Activated T-helper 2 cell treated with anti-CD3 and anti-CD28 coated beads, Interferon-gamma antibody, Interleukin-2, Interleukin-4, amounts not matched to agents 10 μg/mL and 5 μg/mL and 100 μg/mL, durations not matched to agents 14 hours and 24 hours and 36 hours (primary cell): ENCODE measurements at regions of chr7 and their contacts with region 1.

Region 1: GRCh38 chr7:150514748-150515222 is at the start of gene GIMAP7:
- DNase-seq: peak; percentile 63
- H3K4me3 Mint-ChIP-seq: peak within 1 kb of the TSS; percentile 89
- H3K27ac Mint-ChIP-seq: peak within 1 kb of the TSS; percentile 89
- H3K4me1 Mint-ChIP-seq: peaks cover 45% of the 10 kb centered on the region
- H3K27me3 Mint-ChIP-seq: no peaks in the 10 kb centered on the region
- total RNA-seq, gene GIMAP7: 22.6 and 24.1 TPM in 2 replicates

Region 2: GRCh38 chr7:150481186-150481920 is 33.4 kb before region 1 on chr7:
- intact Hi-C with region 1: loop called (anchors 2 kb)
- DNase-seq: peak; percentile 40
- H3K4me3 Mint-ChIP-seq: peak overlapping the region; percentile 71
- H3K27ac Mint-ChIP-seq: peak overlapping the region; percentile 99
- H3K4me1 Mint-ChIP-seq: peaks cover 79% of the 10 kb centered on the region
- H3K27me3 Mint-ChIP-seq: no peaks in the 10 kb centered on the region

Region 3: DNA sequence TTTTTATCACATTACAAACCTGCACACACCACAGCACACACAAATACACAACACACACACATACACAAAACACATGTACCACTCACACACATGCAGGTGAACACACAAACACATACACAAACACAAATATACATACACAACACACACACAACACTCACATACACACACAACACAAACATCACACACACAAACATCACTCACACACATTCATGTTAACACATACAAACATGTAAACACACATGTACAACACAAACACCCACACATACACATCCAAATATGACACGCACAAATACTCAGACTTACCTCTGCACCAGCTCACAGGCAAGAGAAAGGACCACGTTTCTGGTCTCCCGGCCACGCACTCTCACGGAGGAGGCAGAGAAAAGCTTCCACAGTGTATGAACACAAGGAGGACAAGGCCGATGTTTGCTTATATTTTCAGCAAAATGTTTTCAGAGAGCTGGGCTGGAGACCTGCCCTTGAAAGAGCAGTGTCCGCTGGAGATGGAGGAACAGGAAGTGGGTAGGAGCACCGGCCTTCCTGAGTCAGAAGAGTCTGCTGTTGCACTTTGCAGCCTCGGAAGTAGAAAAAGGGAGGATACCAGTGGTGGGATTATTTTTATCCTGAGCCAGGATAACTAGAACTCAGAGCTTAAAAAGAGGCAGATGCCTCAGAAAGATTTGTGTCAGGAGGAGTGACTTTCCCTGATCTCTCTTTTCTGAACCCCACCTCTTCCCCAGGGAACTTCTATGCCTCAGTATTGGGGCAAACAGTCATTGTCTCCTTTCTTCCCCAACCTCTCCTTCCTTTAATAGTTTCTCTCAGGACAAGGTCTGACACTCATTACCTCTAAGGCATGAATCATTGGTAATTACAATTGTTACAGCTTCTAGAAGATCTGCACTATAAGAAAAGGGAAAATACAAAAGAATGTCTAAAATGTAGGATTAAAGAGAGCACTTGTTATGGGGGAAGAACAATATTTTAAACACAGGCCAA is 117.4 kb after region 1 on chr7 and contains the start of gene GIMAP6:
- intact Hi-C with region 1: loop called (anchors 5 kb)
- DNase-seq: no peak
- H3K4me3 Mint-ChIP-seq: peak within 1 kb of the TSS; percentile 90
- H3K27ac Mint-ChIP-seq: peak within 1 kb of the TSS; percentile 84
- H3K4me1 Mint-ChIP-seq: peaks cover 53% of the 10 kb centered on the region
- H3K27me3 Mint-ChIP-seq: no peaks in the 10 kb centered on the region
- total RNA-seq, gene GIMAP6: 25.8 and 29.4 TPM in 2 replicates